ENCODE measurements at regions of chr7 and their contacts with region 1.

Region 1: GRCh38 chr7:135023622-135024021 is 37.3 kb downstream of the AGBL3 start:
- DNase-seq: no peak
- H3K4me3 ChIP-seq: no peak overlapping the region
- H3K27ac ChIP-seq: no peak overlapping the region
- H3K4me1 ChIP-seq: no peaks in the 10 kb centered on the region
- H3K27me3 ChIP-seq: no peaks in the 10 kb centered on the region
- CTCF ChIP-seq: no peak

Region 2: GRCh38 chr7:134986363-134987251 is 37.0 kb before region 1 on chr7 and contains the start of gene AGBL3:
- CTCF ChIA-PET with region 1: no interaction called
- dilution Hi-C with region 1: no loop called
- in situ Hi-C with region 1: no loop called
- intact Hi-C with region 1: no loop called
- DNase-seq: peak; percentile 88
- H3K4me3 ChIP-seq: peak within 1 kb of the TSS; percentile 70 to 86 (median 71)
- H3K27ac ChIP-seq: peak within 1 kb of the TSS; percentile 64
- H3K4me1 ChIP-seq: no peaks in the 10 kb centered on the region
- H3K27me3 ChIP-seq: no peaks in the 10 kb centered on the region
- CTCF ChIP-seq: peak; percentile 28 to 72
- total RNA-seq, gene AGBL3: 0.61 to 1.2 TPM

Region 3: GRCh38 chr7:135012229-135012628 is 11.4 kb before region 1 on chr7:
- CTCF ChIA-PET with region 1: no interaction called
- dilution Hi-C with region 1: no loop called
- in situ Hi-C with region 1: no loop called
- intact Hi-C with region 1: loop called (anchors 1 kb)
- DNase-seq: no peak
- H3K4me3 ChIP-seq: no peak overlapping the region
- H3K27ac ChIP-seq: no peak overlapping the region
- H3K4me1 ChIP-seq: no peaks in the 10 kb centered on the region
- H3K27me3 ChIP-seq: no peaks in the 10 kb centered on the region
- CTCF ChIP-seq: no peak